Colonic mucosa (tissue), 4 donors: ENCODE measurements at regions of chr22 and their contacts with region 1.

Region 1: GRCh38 chr22:33302049-33302545 is 243.9 kb upstream of the SYN3 start:
- DNase-seq: peak; percentile 85
- H3K4me3 ChIP-seq: no peak overlapping the region
- H3K27ac ChIP-seq: no peak overlapping the region
- H3K4me1 ChIP-seq: no peaks in the 10 kb centered on the region
- H3K27me3 ChIP-seq: no peaks in the 10 kb centered on the region
- CTCF ChIP-seq: peak; percentile 88

Region 2: GRCh38 chr22:33401291-33401690 is 99.2 kb after region 1 on chr22:
- intact Hi-C with region 1: no loop called
- DNase-seq: no peak
- H3K4me3 ChIP-seq: no peak overlapping the region
- H3K27ac ChIP-seq: no peak overlapping the region
- H3K4me1 ChIP-seq: no peaks in the 10 kb centered on the region
- H3K27me3 ChIP-seq: no peaks in the 10 kb centered on the region
- CTCF ChIP-seq: no peak

Region 3: GRCh38 chr22:33519071-33519973 is 217.2 kb after region 1 on chr22:
- intact Hi-C with region 1: loop called (anchors 5 kb)
- DNase-seq: peak; percentile 57
- H3K4me3 ChIP-seq: no peak overlapping the region
- H3K27ac ChIP-seq: no peak overlapping the region
- H3K4me1 ChIP-seq: no peaks in the 10 kb centered on the region
- H3K27me3 ChIP-seq: no peaks in the 10 kb centered on the region
- CTCF ChIP-seq: peak; percentile 46

Region 4: DNA sequence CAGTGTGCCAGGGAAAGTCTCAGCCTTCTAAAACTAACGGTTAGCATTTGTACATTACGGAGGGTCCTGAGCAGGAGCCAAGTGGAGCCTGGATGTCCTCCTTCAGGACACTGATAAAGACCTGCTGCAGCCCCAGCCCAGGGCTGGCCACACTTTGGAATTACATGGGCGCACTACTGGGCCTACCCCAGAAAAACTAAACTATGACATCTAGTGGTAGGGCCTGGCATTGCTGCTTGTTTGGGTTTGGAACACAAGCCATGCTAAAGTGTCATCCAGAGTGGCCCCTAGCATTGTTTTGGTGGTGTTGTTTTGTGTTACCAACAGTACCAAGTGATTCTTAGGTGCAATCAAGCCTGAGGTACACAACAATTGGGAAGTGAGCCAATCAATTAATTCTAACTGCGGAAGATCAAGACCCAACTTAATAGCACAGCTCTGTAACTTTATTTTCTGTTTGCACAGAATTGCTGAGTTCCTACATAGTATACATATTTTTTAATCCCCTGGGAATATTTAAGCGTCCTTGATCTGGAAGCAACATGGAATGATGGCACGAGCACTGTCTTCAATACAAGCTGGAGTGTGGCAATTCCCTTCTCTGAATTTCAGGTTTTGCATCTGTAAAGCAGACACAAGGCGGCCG is 277.5 kb after region 1 on chr22:
- intact Hi-C with region 1: loop called (anchors 2 kb)
- DNase-seq: peak; percentile 81
- H3K4me3 ChIP-seq: no peak overlapping the region
- H3K27ac ChIP-seq: no peak overlapping the region
- H3K4me1 ChIP-seq: peaks cover 11% of the 10 kb centered on the region
- H3K27me3 ChIP-seq: no peaks in the 10 kb centered on the region
- CTCF ChIP-seq: peak; percentile 72

Region 5: DNA sequence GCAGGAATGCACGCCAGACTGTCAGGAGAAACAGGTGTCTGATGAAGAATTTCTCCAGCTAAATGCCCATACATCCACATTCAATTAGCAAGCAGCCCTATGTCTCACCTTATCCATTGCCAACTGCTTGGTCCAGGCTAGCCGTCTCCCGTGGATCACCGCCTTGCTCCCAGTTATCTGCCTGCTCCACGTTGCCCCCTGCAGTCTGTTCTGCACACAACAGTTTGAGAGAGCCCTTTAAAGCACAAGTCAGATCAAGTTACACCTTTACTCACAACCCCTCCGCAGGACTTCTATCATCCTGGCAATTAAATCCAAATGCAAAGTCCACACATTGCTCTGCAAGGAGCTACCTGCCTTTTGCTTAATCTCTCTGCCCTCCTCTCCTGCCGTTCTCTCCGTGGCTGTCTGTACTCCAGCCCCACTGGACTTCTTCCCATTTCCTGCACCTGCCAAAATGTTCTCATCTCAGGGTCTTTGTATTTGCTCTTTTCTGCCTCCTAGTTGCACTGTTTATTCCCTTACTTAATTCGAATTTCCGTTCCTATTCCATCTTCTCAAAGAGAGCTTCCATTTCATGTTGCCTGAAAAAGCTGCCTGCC is 803.5 kb after region 1 on chr22:
- intact Hi-C with region 1: loop called (anchors 10 kb)
- DNase-seq: peak; percentile 73
- H3K4me3 ChIP-seq: no peak overlapping the region
- H3K27ac ChIP-seq: no peak overlapping the region
- H3K4me1 ChIP-seq: no peaks in the 10 kb centered on the region
- H3K27me3 ChIP-seq: no peaks in the 10 kb centered on the region
- CTCF ChIP-seq: peak; percentile 47